ENCODE measurements at regions of chr19 and their contacts with region 1.

Region 1: DNA sequence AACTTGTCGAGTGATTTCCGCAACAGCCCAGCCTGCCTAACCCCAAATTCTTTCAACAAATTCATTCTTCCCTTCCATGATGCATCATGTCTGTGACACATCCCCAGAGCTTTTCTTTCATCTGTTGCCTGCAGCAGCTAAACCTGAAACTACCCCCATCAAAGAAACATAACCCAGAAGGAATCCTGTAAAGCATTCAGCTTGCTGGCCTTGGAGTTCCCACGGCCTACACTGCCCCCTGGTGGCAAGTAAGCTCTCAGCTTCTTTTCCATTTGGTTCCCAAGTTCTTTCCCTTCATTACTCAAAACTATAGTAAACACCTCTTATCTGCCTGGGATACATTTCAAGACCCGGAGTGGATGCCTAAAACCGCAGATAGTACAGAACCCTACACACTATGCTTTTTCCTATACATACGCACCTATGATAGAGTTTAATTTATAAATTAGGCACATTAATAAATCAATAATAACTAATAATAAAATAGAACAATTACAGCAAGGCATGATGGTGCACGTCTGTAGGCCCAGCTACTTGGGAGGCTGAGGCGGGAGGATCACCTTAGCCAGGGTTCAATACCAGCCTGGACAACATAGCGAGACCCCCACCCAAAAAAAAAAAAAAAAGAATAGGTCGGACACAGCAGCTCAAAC is 7.4 kb downstream of the ETHE1 start:
- DNase-seq: peak; percentile 60 to 93
- H3K4me3 ChIP-seq: no peak overlapping the region
- CTCF ChIP-seq: peak in 1 of 3 donors; percentile 63
- POLR2A ChIP-seq: no peak

Region 2: GRCh38 chr19:43444531-43445287 is 74.9 kb before region 1 on chr19:
- intact Hi-C with region 1: loop called (anchors 2 kb)
- DNase-seq: no peak
- H3K4me3 ChIP-seq: no peak overlapping the region
- CTCF ChIP-seq: no peak
- POLR2A ChIP-seq: no peak

Measured in lower leg skin (tissue), 4 donors.